ENCODE measurements at regions of chr12 and their contacts with region 1.

Region 1: GRCh38 chr12:53508534-53509199 is 1.4 kb upstream of the NPFF start:
- DNase-seq: peak; percentile 69 to 88 (median 78)
- ATAC-seq: peak; percentile 99
- H3K4me3 ChIP-seq: no peak overlapping the region
- H3K4me3 Mint-ChIP-seq: no peak overlapping the region
- H3K27ac ChIP-seq: no peak overlapping the region
- H3K27ac Mint-ChIP-seq: peak overlapping the region; percentile 52
- H3K4me1 ChIP-seq: peaks cover 9% of the 10 kb centered on the region
- H3K4me1 Mint-ChIP-seq: peaks cover 6% of the 10 kb centered on the region
- H3K27me3 ChIP-seq: no peaks in the 10 kb centered on the region
- H3K27me3 Mint-ChIP-seq: no peaks in the 10 kb centered on the region
- CTCF ChIP-seq: peak; percentile 87

Region 2: GRCh38 chr12:53133722-53134121 is 374.9 kb before region 1 on chr12:
- CTCF ChIA-PET with region 1: no interaction called
- POLR2A ChIA-PET with region 1: no interaction called
- intact Hi-C with region 1: no loop called
- DNase-seq: no peak
- ATAC-seq: no peak
- H3K4me3 ChIP-seq: no peak overlapping the region
- H3K4me3 Mint-ChIP-seq: no peak overlapping the region
- H3K27ac ChIP-seq: no peak overlapping the region
- H3K27ac Mint-ChIP-seq: no peak overlapping the region
- H3K4me1 ChIP-seq: no peaks in the 10 kb centered on the region
- H3K4me1 Mint-ChIP-seq: no peaks in the 10 kb centered on the region
- H3K27me3 ChIP-seq: no peaks in the 10 kb centered on the region
- H3K27me3 Mint-ChIP-seq: peaks cover 9% of the 10 kb centered on the region
- CTCF ChIP-seq: no peak

Region 3: GRCh38 chr12:53352331-53353256 is 156.1 kb before region 1 on chr12:
- CTCF ChIA-PET with region 1: interaction called, 20 read pairs
- POLR2A ChIA-PET with region 1: interaction called, 6 read pairs
- intact Hi-C with region 1: loop called (anchors 1 kb)
- DNase-seq: peak; percentile 73 to 94 (median 82)
- ATAC-seq: peak; percentile 100
- H3K4me3 ChIP-seq: no peak overlapping the region
- H3K4me3 Mint-ChIP-seq: no peak overlapping the region
- H3K27ac ChIP-seq: no peak overlapping the region
- H3K27ac Mint-ChIP-seq: no peak overlapping the region
- H3K4me1 ChIP-seq: peaks cover 8% of the 10 kb centered on the region
- H3K4me1 Mint-ChIP-seq: peaks cover 7% of the 10 kb centered on the region
- H3K27me3 ChIP-seq: no peaks in the 10 kb centered on the region
- H3K27me3 Mint-ChIP-seq: no peaks in the 10 kb centered on the region
- CTCF ChIP-seq: peak; percentile 82

Region 4: GRCh38 chr12:53414756-53415417 is 93.8 kb before region 1 on chr12:
- CTCF ChIA-PET with region 1: interaction called, 4 read pairs
- POLR2A ChIA-PET with region 1: no interaction called
- intact Hi-C with region 1: loop called in 1 of 2 experiments (anchors 2 kb)
- DNase-seq: no peak
- ATAC-seq: no peak
- H3K4me3 ChIP-seq: no peak overlapping the region
- H3K4me3 Mint-ChIP-seq: no peak overlapping the region
- H3K27ac ChIP-seq: no peak overlapping the region
- H3K27ac Mint-ChIP-seq: peak overlapping the region; percentile 78
- H3K4me1 ChIP-seq: peaks cover 11% of the 10 kb centered on the region
- H3K4me1 Mint-ChIP-seq: peaks cover 63% of the 10 kb centered on the region
- H3K27me3 ChIP-seq: no peaks in the 10 kb centered on the region
- H3K27me3 Mint-ChIP-seq: no peaks in the 10 kb centered on the region
- CTCF ChIP-seq: no peak

Region 5: DNA sequence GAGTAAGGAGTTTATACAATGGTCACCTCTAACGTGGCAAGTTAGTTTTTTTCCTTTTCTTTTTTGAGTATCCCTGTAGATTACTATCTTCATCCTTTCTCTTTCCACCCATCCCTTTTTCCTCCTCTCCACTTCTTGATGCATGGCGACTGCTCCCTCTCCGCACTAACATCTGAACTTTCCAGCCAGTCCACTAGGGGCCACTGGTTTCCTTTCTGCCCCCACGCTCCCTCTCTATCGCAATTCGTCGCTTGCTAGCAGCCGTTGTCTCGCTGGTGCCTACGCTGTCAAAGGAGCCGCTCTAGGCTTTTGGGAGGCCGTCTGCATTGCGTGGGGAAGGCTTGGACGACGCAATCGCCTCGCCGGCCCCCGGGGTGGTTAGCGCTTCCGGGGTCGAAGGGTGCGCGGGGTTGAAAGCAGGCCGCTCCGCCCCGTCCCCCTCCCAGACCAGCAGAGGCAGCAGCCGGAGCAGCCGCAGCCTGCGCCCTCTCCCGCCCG is 57.0 kb before region 1 on chr12 and contains the start of gene PCBP2:
- CTCF ChIA-PET with region 1: no interaction called
- POLR2A ChIA-PET with region 1: interaction called, 4 read pairs
- intact Hi-C with region 1: loop called in 1 of 2 experiments (anchors 2 kb)
- DNase-seq: peak; percentile 93 to 99 (median 97)
- ATAC-seq: peak; percentile 93
- H3K4me3 ChIP-seq: peak within 1 kb of the TSS; percentile 86
- H3K4me3 Mint-ChIP-seq: peak within 1 kb of the TSS; percentile 98
- H3K27ac ChIP-seq: peak within 1 kb of the TSS; percentile 93
- H3K27ac Mint-ChIP-seq: peak within 1 kb of the TSS; percentile 89
- H3K4me1 ChIP-seq: peaks cover 16% of the 10 kb centered on the region
- H3K4me1 Mint-ChIP-seq: peaks cover 46% of the 10 kb centered on the region
- H3K27me3 ChIP-seq: no peaks in the 10 kb centered on the region
- H3K27me3 Mint-ChIP-seq: no peaks in the 10 kb centered on the region
- CTCF ChIP-seq: peak; percentile 87
- total RNA-seq, gene PCBP2: 1,331 to 1,359 TPM

Region 6: DNA sequence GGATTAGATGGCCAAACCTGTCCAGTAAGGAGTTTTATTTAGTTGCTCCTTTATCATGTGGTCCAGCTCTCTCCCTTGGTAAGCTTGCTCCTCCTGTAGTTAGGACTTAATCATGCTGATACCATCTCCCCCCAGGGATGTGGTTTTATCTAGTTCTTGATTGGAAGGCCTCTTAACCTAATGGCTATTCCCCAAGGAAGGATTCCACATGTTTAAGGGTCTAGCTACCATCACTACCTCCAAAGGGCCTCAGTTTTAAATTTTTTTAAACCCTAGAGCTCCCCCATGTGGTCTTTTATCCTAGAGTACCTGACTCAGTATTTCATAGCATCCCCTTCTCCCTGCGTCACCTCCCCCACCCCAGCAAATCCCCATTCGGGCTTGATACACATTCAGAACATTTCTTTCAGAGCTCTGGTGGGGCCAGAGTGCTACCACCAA is 31.9 kb before region 1 on chr12:
- CTCF ChIA-PET with region 1: interaction called, 14 read pairs
- POLR2A ChIA-PET with region 1: interaction called, 5 read pairs
- intact Hi-C with region 1: loop called in 1 of 2 experiments (anchors 2 kb)
- DNase-seq: peak in 3 of 14 experiments; percentile 23 to 45 (median 37)
- ATAC-seq: peak; percentile 31
- H3K4me3 ChIP-seq: no peak overlapping the region
- H3K4me3 Mint-ChIP-seq: no peak overlapping the region
- H3K27ac ChIP-seq: no peak overlapping the region
- H3K27ac Mint-ChIP-seq: peak overlapping the region; percentile 52
- H3K4me1 ChIP-seq: peaks cover 11% of the 10 kb centered on the region
- H3K4me1 Mint-ChIP-seq: peaks cover 54% of the 10 kb centered on the region
- H3K27me3 ChIP-seq: no peaks in the 10 kb centered on the region
- H3K27me3 Mint-ChIP-seq: no peaks in the 10 kb centered on the region
- CTCF ChIP-seq: peak; percentile 35

Region 7: DNA sequence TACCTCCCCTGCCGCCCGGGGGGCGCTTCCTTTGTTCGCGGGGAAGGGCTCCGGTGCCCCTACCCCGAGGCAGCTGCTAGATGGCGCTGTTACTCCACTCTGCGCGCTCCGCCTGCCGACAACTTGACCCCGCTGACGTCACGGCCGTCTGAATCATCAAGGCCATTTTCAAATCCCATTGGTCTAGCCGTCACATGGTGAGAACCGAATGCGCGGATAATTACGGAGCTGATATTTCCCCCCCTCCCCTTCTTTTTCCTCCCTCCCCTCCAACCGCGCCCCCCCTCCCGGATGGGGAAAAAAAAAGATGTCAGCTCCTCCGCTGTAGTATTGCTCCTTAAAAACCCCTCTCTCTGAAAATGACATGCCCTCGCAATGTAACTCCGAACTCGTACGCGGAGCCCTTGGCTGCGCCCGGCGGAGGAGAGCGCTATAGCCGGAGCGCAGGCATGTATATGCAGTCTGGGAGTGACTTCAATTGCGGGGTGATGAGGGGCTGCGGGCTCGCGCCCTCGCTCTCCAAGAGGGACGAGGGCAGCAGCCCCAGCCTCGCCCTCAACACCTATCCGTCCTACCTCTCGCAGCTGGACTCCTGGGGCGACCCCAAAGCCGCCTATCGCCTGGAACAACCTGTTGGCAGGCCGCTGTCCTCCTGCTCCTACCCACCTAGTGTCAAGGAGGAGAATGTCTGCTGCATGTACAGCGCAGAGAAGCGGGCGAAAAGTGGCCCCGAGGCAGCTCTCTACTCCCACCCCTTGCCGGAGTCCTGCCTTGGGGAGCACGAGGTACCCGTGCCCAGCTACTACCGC is 476.4 kb after region 1 on chr12 and contains the start of gene HOXC10:
- CTCF ChIA-PET with region 1: no interaction called
- POLR2A ChIA-PET with region 1: no interaction called
- intact Hi-C with region 1: no loop called
- DNase-seq: peak in 13 of 14 experiments; percentile 33 to 84 (median 64)
- ATAC-seq: peak; percentile 62
- H3K4me3 ChIP-seq: peak within 1 kb of the TSS; percentile 4
- H3K4me3 Mint-ChIP-seq: peak within 1 kb of the TSS; percentile 82
- H3K27ac ChIP-seq: no peak within 1 kb of the TSS
- H3K27ac Mint-ChIP-seq: peak within 1 kb of the TSS; percentile 47
- H3K4me1 ChIP-seq: peaks cover 45% of the 10 kb centered on the region
- H3K4me1 Mint-ChIP-seq: peaks cover 28% of the 10 kb centered on the region
- H3K27me3 ChIP-seq: peaks cover 89 to 98% of the 10 kb centered on the region in 2 experiments
- H3K27me3 Mint-ChIP-seq: peaks cover 95% of the 10 kb centered on the region
- CTCF ChIP-seq: no peak
- total RNA-seq, gene HOXC10: not detected

Measured in CD4-positive, alpha-beta T cell (primary cell).